BJ (cell line): ENCODE measurements at regions of chr3 and their contacts with region 1.

Region 1: DNA sequence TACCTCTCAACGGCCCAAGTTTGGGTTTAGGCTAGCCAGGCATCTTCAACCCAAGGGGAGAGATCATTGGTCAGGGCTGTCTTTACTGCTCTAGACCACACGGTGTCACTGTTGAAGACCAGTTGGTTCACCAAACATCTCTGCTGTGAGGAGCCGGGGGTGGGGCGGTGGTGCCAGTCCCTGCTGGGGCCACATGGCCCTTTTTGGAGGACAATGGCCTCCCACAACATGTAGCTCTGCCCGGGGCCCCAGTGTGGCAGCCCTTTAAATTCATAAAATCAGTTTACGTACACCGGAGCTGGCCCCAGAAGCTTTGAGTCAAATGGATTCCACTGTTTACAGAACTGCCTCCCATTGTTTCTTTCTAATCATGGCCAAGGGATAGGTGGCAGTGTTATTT is 19.1 kb upstream of the TM4SF18 start:
- DNase-seq: no peak
- H3K4me3 ChIP-seq: no peak overlapping the region
- H3K27me3 ChIP-seq: no peaks in the 10 kb centered on the region
- CTCF ChIP-seq: peak; percentile 82

Region 2: DNA sequence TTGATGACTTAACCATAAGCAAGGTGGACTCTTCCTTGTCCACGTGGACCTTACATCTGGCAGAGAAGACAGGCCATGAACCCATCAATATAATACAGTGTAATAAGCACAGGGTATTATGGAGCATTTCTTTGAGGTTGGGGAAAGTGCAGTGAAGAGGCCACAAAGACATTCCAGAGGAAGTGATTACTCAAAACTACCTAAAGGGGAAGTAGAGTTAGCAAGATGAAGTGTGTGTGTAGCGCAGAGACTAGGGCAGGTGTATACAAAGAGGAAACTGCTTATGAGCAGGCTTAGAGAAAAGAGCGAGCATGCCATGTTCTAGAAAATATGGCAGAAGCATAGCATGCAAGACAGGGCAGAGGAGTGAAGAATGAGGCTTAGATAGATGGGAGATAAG is 148.8 kb before region 1 on chr3:
- CTCF ChIA-PET with region 1: no interaction called
- POLR2A ChIA-PET with region 1: no interaction called
- DNase-seq: no peak
- H3K4me3 ChIP-seq: no peak overlapping the region
- H3K27me3 ChIP-seq: no peaks in the 10 kb centered on the region
- CTCF ChIP-seq: no peak

Region 3: GRCh38 chr3:149273096-149273751 is 79.3 kb before region 1 on chr3:
- CTCF ChIA-PET with region 1: no interaction called
- POLR2A ChIA-PET with region 1: no interaction called
- DNase-seq: peak; percentile 19
- H3K4me3 ChIP-seq: no peak overlapping the region
- H3K27me3 ChIP-seq: no peaks in the 10 kb centered on the region
- CTCF ChIP-seq: peak; percentile 88

Region 4: DNA sequence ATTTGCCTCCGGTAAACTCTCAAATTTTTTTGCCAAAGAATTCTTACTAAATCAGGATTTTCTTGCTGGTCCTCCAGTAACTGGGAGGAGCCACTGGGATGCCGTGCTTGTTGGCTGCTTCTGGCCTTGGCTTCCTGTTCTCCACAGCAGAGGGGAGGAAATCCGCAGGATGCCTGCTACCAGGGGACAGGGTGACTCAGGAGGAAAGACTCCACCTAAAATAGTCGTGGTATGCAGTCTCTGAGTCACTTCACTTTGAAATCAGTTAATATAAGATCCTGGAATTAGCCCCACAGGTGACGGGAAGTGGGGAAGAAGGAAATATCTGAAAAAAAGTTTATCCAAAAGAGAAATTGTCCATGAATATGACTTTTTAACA is 12.6 kb before region 1 on chr3:
- CTCF ChIA-PET with region 1: interaction called, 11 read pairs
- POLR2A ChIA-PET with region 1: no interaction called
- DNase-seq: peak; percentile 94
- H3K4me3 ChIP-seq: no peak overlapping the region
- H3K27me3 ChIP-seq: no peaks in the 10 kb centered on the region
- CTCF ChIP-seq: no peak

Region 5: DNA sequence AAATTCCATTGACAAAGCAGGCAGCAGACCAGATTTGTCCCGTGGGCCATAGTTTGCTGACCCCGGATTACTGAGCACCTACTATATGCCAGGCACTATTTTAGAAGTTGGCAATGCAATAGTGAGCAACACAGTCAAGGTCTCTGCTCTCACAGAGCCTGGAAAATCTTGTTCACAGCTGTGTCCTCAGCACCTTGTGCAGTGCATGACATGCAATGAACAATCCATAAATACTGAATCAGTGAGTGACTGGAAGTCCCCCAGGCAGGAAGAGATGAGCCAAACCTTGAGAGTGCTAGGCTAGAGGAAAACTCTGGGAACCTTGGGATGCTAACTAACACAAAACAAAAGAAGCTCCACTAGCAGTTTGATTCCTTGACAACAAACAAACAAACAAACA is 10.5 kb after region 1 on chr3:
- CTCF ChIA-PET with region 1: interaction called, 12 read pairs
- POLR2A ChIA-PET with region 1: interaction called, 4 read pairs
- DNase-seq: no peak
- H3K4me3 ChIP-seq: no peak overlapping the region
- H3K27me3 ChIP-seq: no peaks in the 10 kb centered on the region
- CTCF ChIP-seq: no peak

Region 6: DNA sequence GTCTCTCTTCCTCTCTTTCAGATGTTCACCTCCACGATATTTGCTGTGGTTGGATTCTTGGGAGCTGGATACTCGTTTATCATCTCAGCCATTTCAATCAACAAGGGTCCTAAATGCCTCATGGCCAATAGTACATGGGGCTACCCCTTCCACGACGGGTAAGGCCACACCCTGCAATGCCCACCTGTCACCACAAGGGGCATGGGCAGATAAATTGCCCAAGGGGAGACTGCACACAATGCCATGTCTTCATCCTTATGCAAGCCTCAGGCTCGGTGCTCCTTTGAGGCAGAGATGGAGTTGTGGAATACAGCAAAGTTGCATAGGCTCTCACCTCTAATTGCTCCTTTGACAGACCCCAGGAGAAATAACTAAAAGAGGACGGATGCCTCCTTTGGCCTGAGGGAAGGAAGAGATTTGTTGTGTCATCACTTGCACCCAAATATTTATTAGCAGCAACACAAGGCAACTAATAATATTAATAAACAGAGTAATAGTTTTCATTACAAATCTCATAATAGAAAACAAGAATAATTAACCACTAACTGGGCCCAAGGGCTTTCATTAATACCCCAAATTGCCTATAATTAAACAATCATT is 135.1 kb after region 1 on chr3:
- CTCF ChIA-PET with region 1: interaction called, 16 read pairs
- POLR2A ChIA-PET with region 1: no interaction called
- DNase-seq: no peak
- H3K4me3 ChIP-seq: no peak overlapping the region
- H3K27me3 ChIP-seq: no peaks in the 10 kb centered on the region
- CTCF ChIP-seq: no peak